Caco-2 (cell line): ENCODE measurements at regions of chr17 and their contacts with region 1.

Region 1: DNA sequence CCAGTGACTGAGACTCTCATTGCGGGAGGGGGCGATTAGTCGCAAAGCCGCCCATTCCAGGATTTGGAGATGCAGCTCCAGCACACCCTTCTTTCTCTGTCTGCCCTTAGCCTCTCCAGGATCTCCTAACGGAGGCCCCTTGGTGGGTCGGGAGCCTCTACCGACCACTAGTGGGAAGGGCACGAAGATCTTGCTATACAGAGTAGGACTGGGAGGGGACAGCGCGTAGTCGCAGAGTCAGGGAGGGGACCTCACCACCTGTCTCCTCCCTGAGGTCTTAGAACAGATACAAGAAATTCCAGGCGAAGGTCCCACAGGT is 588 bp upstream of the SMTNL2 start:
- DNase-seq: peak; percentile 76 to 77
- H3K4me3 ChIP-seq: peak overlapping the region; percentile 71
- H3K4me3 Mint-ChIP-seq: peak overlapping the region; percentile 84
- H3K27ac Mint-ChIP-seq: peak overlapping the region; percentile 75
- H3K4me1 ChIP-seq: peaks cover 19% of the 10 kb centered on the region; the same call in 1 of the 2 replicates
- H3K4me1 Mint-ChIP-seq: peaks cover 12% of the 10 kb centered on the region
- H3K27me3 ChIP-seq: no peaks in the 10 kb centered on the region
- H3K27me3 Mint-ChIP-seq: no peaks in the 10 kb centered on the region
- CTCF ChIP-seq: peak; percentile 26 to 45

Region 2: GRCh38 chr17:4375039-4375748 is 208.5 kb before region 1 on chr17:
- CTCF ChIA-PET with region 1: no interaction called
- POLR2A ChIA-PET with region 1: no interaction called
- intact Hi-C with region 1: no loop called
- DNase-seq: no peak
- H3K4me3 ChIP-seq: no peak overlapping the region
- H3K4me3 Mint-ChIP-seq: no peak overlapping the region
- H3K27ac Mint-ChIP-seq: no peak overlapping the region
- H3K4me1 ChIP-seq: no peaks in the 10 kb centered on the region
- H3K4me1 Mint-ChIP-seq: peaks cover 6% of the 10 kb centered on the region
- H3K27me3 ChIP-seq: no peaks in the 10 kb centered on the region
- H3K27me3 Mint-ChIP-seq: no peaks in the 10 kb centered on the region
- CTCF ChIP-seq: no peak

Region 3: GRCh38 chr17:4554997-4555799 is 28.5 kb before region 1 on chr17 and contains the start of gene MYBBP1A:
- CTCF ChIA-PET with region 1: no interaction called
- POLR2A ChIA-PET with region 1: no interaction called
- intact Hi-C with region 1: no loop called
- DNase-seq: peak; percentile 91
- H3K4me3 ChIP-seq: peak within 1 kb of the TSS; percentile 85
- H3K4me3 Mint-ChIP-seq: peak within 1 kb of the TSS; percentile 81
- H3K27ac Mint-ChIP-seq: peak within 1 kb of the TSS; percentile 91
- H3K4me1 ChIP-seq: no peaks in the 10 kb centered on the region
- H3K4me1 Mint-ChIP-seq: peaks cover 7% of the 10 kb centered on the region
- H3K27me3 ChIP-seq: no peaks in the 10 kb centered on the region
- H3K27me3 Mint-ChIP-seq: no peaks in the 10 kb centered on the region
- CTCF ChIP-seq: no peak
- total RNA-seq, gene MYBBP1A: 44.5 and 47.4 TPM in 2 replicates

Region 4: GRCh38 chr17:4610162-4610561 is 26.4 kb after region 1 on chr17:
- CTCF ChIA-PET with region 1: interaction called, 14 read pairs
- POLR2A ChIA-PET with region 1: interaction called, 19 read pairs
- intact Hi-C with region 1: no loop called
- DNase-seq: peak; percentile 83 to 89
- H3K4me3 ChIP-seq: peak overlapping the region; percentile 45
- H3K4me3 Mint-ChIP-seq: peak overlapping the region; percentile 93
- H3K27ac Mint-ChIP-seq: peak overlapping the region; percentile 99
- H3K4me1 ChIP-seq: peaks cover 31% of the 10 kb centered on the region
- H3K4me1 Mint-ChIP-seq: peaks cover 6% of the 10 kb centered on the region
- H3K27me3 ChIP-seq: no peaks in the 10 kb centered on the region
- H3K27me3 Mint-ChIP-seq: no peaks in the 10 kb centered on the region
- CTCF ChIP-seq: no peak

Region 5: GRCh38 chr17:4706121-4706520 is 122.4 kb after region 1 on chr17:
- CTCF ChIA-PET with region 1: no interaction called
- POLR2A ChIA-PET with region 1: no interaction called
- intact Hi-C with region 1: no loop called
- DNase-seq: no peak
- H3K4me3 ChIP-seq: no peak overlapping the region
- H3K4me3 Mint-ChIP-seq: peak overlapping the region; percentile 82
- H3K27ac Mint-ChIP-seq: no peak overlapping the region
- H3K4me1 ChIP-seq: no peaks in the 10 kb centered on the region
- H3K4me1 Mint-ChIP-seq: peaks cover 16% of the 10 kb centered on the region
- H3K27me3 ChIP-seq: no peaks in the 10 kb centered on the region
- H3K27me3 Mint-ChIP-seq: no peaks in the 10 kb centered on the region
- CTCF ChIP-seq: no peak

Region 6: GRCh38 chr17:5019475-5019956 is 435.8 kb after region 1 on chr17:
- CTCF ChIA-PET with region 1: no interaction called
- POLR2A ChIA-PET with region 1: no interaction called
- intact Hi-C with region 1: no loop called
- DNase-seq: peak in 1 of 2 experiments; percentile 30
- H3K4me3 ChIP-seq: no peak overlapping the region
- H3K4me3 Mint-ChIP-seq: no peak overlapping the region
- H3K27ac Mint-ChIP-seq: no peak overlapping the region
- H3K4me1 ChIP-seq: no peaks in the 10 kb centered on the region
- H3K4me1 Mint-ChIP-seq: peaks cover 7% of the 10 kb centered on the region
- H3K27me3 ChIP-seq: no peaks in the 10 kb centered on the region
- H3K27me3 Mint-ChIP-seq: no peaks in the 10 kb centered on the region
- CTCF ChIP-seq: peak in 1 of 2 experiments; percentile 4